ENCODE measurements at regions of chr9 and their contacts with region 1.

Region 1: GRCh38 chr9:114995681-114996221 is 65.4 kb upstream of the TNFSF8 start:
- DNase-seq: peak in 3 of 14 experiments; percentile 20 to 53 (median 38)
- ATAC-seq: no peak
- H3K4me3 ChIP-seq: no peak overlapping the region
- H3K4me3 Mint-ChIP-seq: no peak overlapping the region
- H3K27ac ChIP-seq: no peak overlapping the region
- H3K27ac Mint-ChIP-seq: no peak overlapping the region
- H3K4me1 ChIP-seq: peaks cover 9% of the 10 kb centered on the region
- H3K4me1 Mint-ChIP-seq: peaks cover 12% of the 10 kb centered on the region
- H3K27me3 ChIP-seq: peaks cover 5% of the 10 kb centered on the region in 2 experiments
- H3K27me3 Mint-ChIP-seq: peaks cover 5% of the 10 kb centered on the region
- CTCF ChIP-seq: no peak

Region 2: DNA sequence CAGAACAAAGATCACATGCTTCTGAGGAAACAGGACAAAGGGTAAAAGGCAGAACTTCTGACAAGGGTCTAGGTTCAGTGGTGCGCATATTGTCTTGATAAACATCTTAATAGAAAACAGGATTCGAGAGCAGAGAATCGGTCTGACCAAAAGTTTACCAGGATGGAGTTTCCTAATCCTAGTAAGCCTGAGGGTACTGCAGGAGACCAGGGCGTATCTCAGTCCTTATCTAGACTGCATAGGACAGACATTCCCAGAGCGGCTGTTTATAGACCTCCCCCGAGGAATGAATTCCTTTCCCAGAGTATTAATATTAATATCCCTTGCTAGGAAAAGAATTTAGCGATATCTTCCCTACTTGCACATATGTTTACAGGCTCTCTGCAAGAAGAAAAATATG is 32.9 kb before region 1 on chr9:
- CTCF ChIA-PET with region 1: no interaction called
- POLR2A ChIA-PET with region 1: no interaction called
- intact Hi-C with region 1: loop called in 1 of 2 experiments (anchors 5 kb)
- DNase-seq: no peak
- ATAC-seq: no peak
- H3K4me3 ChIP-seq: no peak overlapping the region
- H3K4me3 Mint-ChIP-seq: no peak overlapping the region
- H3K27ac ChIP-seq: no peak overlapping the region
- H3K27ac Mint-ChIP-seq: no peak overlapping the region
- H3K4me1 ChIP-seq: peaks cover 5% of the 10 kb centered on the region
- H3K4me1 Mint-ChIP-seq: peaks cover 15% of the 10 kb centered on the region
- H3K27me3 ChIP-seq: no peaks in the 10 kb centered on the region
- H3K27me3 Mint-ChIP-seq: no peaks in the 10 kb centered on the region
- CTCF ChIP-seq: no peak

Measured in CD4-positive, alpha-beta T cell (primary cell).